Gastrocnemius medialis (tissue), 4 donors: ENCODE measurements at regions of chr9 and their contacts with region 1.

Region 1: GRCh38 chr9:34651876-34652601 is at the start of gene IL11RA:
- DNase-seq: peak; percentile 91 to 97
- ATAC-seq: peak; percentile 83 to 84
- H3K4me3 ChIP-seq: peak within 1 kb of the TSS; percentile 40 to 62 (median 58)
- H3K27ac ChIP-seq: peak within 1 kb of the TSS; percentile 88 to 91 (median 89)
- H3K4me1 ChIP-seq: peaks cover 46 to 54% of the 10 kb centered on the region in 2 donors
- H3K27me3 ChIP-seq: no peaks in the 10 kb centered on the region
- CTCF ChIP-seq: no peak
- POLR2A ChIP-seq: peak; percentile 61 to 75
- total RNA-seq, gene IL11RA: 3.3 to 15.3 (median 11.6) TPM

Region 2: DNA sequence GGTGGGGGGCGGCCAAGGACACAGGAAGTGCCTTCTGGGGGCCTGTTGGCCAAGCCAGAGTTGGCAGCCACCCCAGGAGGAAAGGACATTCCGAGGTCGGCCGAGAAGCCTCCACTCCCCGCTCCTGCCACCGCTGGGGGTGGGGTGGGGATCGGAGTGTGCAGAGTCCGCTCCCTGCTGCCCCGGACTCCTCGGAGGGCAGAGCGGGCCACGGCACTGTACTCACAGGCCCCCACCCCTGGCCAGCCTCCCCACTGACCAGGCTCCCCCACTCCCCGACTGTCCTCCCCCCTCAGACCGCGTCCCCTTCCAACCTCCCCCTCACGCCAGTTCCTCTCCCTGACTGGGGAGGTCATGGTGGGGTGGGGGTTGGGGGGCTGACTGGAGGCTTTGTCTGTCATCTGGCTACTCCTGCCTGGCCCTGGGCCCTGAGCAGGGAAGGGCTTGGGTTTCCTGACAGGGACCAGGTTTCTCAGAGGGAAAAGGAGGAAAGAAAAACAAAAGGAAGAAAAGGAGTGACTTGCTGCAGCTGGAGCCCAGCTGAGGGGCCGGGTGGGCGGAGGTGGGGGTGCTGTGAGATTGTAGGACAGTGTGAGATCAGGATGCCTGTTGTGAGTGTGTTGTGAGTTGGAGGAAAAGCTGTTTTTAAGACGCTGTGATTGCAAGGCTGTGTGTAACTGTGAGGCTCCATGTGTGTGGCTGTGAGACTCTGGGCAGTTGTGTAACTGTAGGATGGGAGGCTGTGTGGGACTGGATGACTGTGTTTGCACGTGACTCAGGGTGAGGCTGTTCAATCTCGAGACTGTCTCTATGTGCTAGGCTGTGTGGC is 92.2 kb before region 1 on chr9:
- in situ Hi-C with region 1: no loop called
- intact Hi-C with region 1: loop called (anchors 1 kb)
- DNase-seq: peak; percentile 59 to 92
- ATAC-seq: peak; percentile 62 to 66
- H3K4me3 ChIP-seq: peak overlapping the region in 3 of 4 donors; percentile 14 to 33 (median 31)
- H3K27ac ChIP-seq: peak overlapping the region; percentile 92 to 97 (median 93)
- H3K4me1 ChIP-seq: peaks cover 48 to 67% of the 10 kb centered on the region in 2 donors
- H3K27me3 ChIP-seq: no peaks in the 10 kb centered on the region
- CTCF ChIP-seq: no peak
- POLR2A ChIP-seq: no peak

Region 3: DNA sequence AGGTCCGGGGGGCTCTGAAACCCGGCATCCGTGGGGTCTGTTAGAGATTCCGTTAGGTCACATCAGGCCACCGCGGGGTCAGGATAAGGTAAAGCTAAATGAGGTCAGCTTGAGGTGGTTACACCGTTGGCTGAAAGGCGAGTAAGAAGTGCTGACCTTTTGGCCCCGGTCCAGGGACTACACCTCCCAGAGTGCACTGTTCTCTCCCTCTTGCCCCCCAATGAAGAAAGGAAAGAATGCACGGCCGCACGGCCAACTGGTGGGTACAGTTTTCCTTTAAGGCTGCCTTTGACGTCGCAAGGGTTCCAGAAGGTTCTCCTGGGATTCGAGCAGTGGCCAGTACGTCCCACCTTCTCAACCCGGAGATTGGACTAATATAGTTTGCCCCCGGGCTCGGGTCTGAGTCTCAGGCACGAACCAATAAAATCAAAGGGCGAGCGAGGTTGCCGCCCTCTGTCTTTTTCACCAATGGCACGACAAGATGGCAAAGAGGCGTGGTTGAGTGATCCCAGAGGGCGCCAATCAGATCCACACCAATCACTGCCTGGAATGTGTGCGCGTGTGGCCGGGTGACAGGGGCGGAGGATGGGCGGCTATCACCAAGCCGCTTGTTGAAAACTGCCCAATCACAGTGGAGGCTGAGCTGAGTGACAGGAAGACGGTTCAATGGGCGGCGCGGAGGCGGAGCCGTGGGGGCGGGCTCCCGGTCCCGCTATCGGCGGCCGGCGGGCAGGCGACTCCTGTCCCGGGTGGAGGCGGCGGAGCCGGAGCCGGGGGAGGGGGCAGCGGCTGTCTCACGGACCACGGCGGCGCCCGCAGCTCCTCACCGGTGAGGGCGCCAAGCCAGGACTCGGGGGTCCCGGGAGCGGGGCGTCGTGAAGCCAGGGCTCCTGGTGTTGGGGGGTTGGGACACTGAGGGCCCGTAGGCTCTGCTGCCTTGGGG is 337.2 kb after region 1 on chr9 and contains the start of gene DNAJB5:
- in situ Hi-C with region 1: no loop called
- intact Hi-C with region 1: loop called (anchors 5 kb)
- DNase-seq: peak; percentile 99 to 100
- ATAC-seq: peak; percentile 47 to 51
- H3K4me3 ChIP-seq: peak within 1 kb of the TSS; percentile 80 to 91 (median 89)
- H3K27ac ChIP-seq: peak within 1 kb of the TSS in 3 of 4 donors; percentile 85 to 93 (median 89)
- H3K4me1 ChIP-seq: peaks cover 27 to 28% of the 10 kb centered on the region in 2 donors
- H3K27me3 ChIP-seq: no peaks in the 10 kb centered on the region
- CTCF ChIP-seq: no peak
- POLR2A ChIP-seq: no peak
- total RNA-seq, gene DNAJB5: 75.3 to 187 (median 128) TPM